ENCODE measurements at regions of chr1 and their contacts with region 1.

Region 1: GRCh38 chr1:85612704-85613361 is 32.3 kb downstream of the CCN1 start:
- DNase-seq: peak; percentile 85
- ATAC-seq: peak; percentile 92
- H3K4me3 ChIP-seq: peak overlapping the region; percentile 30 to 44 (median 30); a peak in 4 of 6 replicates
- H3K27ac ChIP-seq: peak overlapping the region; percentile 51
- H3K4me1 ChIP-seq: peaks cover 23% of the 10 kb centered on the region
- H3K27me3 ChIP-seq: no peaks in the 10 kb centered on the region
- CTCF ChIP-seq: peak; percentile 72
- EP300 ChIP-seq: no peak
- POLR2A ChIP-seq: peak in 1 of 2 experiments; percentile 31; a peak in 1 of 4 replicates
- RAD21 ChIP-seq: peak; percentile 66

Region 2: GRCh38 chr1:85584264-85584781 is 28.5 kb before region 1 on chr1:
- CTCF ChIA-PET with region 1: interaction called, 3 read pairs
- POLR2A ChIA-PET with region 1: interaction called, 58 read pairs
- in situ Hi-C with region 1: no loop called
- intact Hi-C with region 1: loop called (anchors 2 kb)
- DNase-seq: peak; percentile 63
- ATAC-seq: no peak
- H3K4me3 ChIP-seq: no peak overlapping the region
- H3K27ac ChIP-seq: no peak overlapping the region
- H3K4me1 ChIP-seq: peaks cover 52% of the 10 kb centered on the region
- H3K27me3 ChIP-seq: peaks cover 0 to 3% of the 10 kb centered on the region in 2 experiments; a peak in 1 of 5 replicates
- CTCF ChIP-seq: no peak
- EP300 ChIP-seq: no peak; a peak in 1 of 4 replicates
- POLR2A ChIP-seq: peak in 1 of 2 experiments; percentile 83; a peak in 2 of 4 replicates
- RAD21 ChIP-seq: no peak

Region 3: GRCh38 chr1:85628791-85629531 is 16.1 kb after region 1 on chr1:
- CTCF ChIA-PET with region 1: no interaction called
- POLR2A ChIA-PET with region 1: interaction called, 38 read pairs
- in situ Hi-C with region 1: no loop called
- intact Hi-C with region 1: loop called (anchors 2 kb)
- DNase-seq: peak; percentile 82
- ATAC-seq: peak; percentile 96
- H3K4me3 ChIP-seq: peak overlapping the region; percentile 48 to 62 (median 56)
- H3K27ac ChIP-seq: peak overlapping the region; percentile 91
- H3K4me1 ChIP-seq: peaks cover 41% of the 10 kb centered on the region
- H3K27me3 ChIP-seq: no peaks in the 10 kb centered on the region
- CTCF ChIP-seq: no peak
- EP300 ChIP-seq: 0 out of 4 replicates have a peak, but pooled peaks of 1 of the 2 experiments have one; percentile 10
- POLR2A ChIP-seq: peak; percentile 15 to 50; a peak in 2 of 4 replicates
- RAD21 ChIP-seq: no peak

Region 4: DNA sequence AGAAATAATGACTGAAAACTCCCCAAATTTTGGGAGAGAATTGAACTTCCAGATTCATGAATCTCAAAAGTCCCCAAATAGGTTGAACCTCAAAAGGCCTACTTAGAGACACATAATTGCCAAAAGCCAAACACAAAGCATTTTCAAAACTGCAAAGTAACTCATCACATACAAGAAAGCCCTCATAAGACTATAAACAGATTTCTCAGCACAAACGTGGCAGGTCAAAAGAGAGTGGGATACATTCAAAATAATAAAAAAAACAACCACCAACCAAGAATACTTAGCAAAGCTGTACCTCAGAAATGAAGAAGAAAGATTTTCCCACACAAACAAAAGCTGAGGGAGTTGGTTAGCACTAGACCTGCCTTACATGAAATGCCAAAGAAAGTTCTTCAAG is 25.6 kb after region 1 on chr1:
- CTCF ChIA-PET with region 1: no interaction called
- POLR2A ChIA-PET with region 1: interaction called, 15 read pairs
- in situ Hi-C with region 1: no loop called
- intact Hi-C with region 1: loop called (anchors 1 kb)
- DNase-seq: no peak
- ATAC-seq: no peak
- H3K4me3 ChIP-seq: no peak overlapping the region
- H3K27ac ChIP-seq: no peak overlapping the region
- H3K4me1 ChIP-seq: peaks cover 20% of the 10 kb centered on the region
- H3K27me3 ChIP-seq: no peaks in the 10 kb centered on the region
- CTCF ChIP-seq: no peak
- EP300 ChIP-seq: no peak
- POLR2A ChIP-seq: no peak
- RAD21 ChIP-seq: no peak

Region 5: DNA sequence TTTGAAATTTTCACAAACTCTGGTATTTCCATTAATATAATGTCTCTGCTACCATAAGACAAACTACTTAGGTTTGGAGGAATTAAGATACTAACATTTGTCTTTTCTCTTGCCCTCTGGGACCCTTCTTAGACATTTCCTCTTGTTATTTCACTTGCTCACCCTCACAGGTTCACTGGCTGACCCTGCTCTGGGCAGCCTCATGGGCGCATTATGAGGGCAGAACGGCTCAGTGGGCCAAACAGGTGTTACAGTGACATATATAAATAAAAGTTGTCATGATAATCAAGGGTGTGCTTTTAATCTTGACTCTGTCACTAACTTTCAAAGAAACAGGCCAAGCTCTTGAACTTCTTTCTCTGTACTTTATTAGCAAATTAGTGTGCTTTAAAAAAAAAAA is 48.9 kb after region 1 on chr1:
- CTCF ChIA-PET with region 1: no interaction called
- POLR2A ChIA-PET with region 1: no interaction called
- in situ Hi-C with region 1: no loop called
- intact Hi-C with region 1: no loop called
- DNase-seq: no peak
- ATAC-seq: peak; percentile 51; the same call in 1 of the 3 replicates
- H3K4me3 ChIP-seq: no peak overlapping the region
- H3K27ac ChIP-seq: no peak overlapping the region
- H3K4me1 ChIP-seq: peaks cover 13% of the 10 kb centered on the region; the same call in 1 of the 2 replicates
- H3K27me3 ChIP-seq: no peaks in the 10 kb centered on the region; a peak in 1 of 5 replicates
- CTCF ChIP-seq: no peak
- EP300 ChIP-seq: no peak
- POLR2A ChIP-seq: no peak
- RAD21 ChIP-seq: no peak

Region 6: DNA sequence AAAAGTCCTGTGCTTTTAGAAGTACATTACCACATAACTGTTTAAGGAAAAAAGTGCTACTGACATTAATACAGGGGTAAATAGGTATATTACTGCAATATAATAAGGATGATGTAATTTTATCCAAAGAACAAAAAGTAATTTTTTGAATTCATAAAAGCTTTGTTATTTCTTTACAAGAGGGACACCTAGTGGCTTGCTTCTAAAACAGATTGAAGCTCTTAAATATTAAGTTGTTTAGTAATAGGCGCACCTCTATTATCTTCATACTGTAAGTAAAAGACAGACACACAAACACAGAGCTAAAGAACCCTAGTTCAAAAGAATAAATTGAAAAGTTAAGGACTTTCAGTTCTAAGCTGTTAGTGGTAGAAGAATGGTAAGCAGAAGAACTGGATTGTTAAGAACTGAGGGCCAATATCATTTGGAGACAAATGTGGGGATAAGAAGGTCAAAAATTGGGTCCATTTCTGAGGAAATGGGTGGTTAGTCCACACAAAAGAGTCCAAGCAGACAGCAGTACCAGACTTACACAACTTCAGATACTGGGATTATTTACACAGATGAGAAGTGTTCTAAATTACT is 80.0 kb after region 1 on chr1:
- CTCF ChIA-PET with region 1: interaction called, 3 read pairs
- POLR2A ChIA-PET with region 1: interaction called, 3 read pairs
- in situ Hi-C with region 1: loop called (anchors 10 kb)
- intact Hi-C with region 1: loop called (anchors 5 kb)
- DNase-seq: peak; percentile 37
- ATAC-seq: no peak
- H3K4me3 ChIP-seq: no peak overlapping the region
- H3K27ac ChIP-seq: peak overlapping the region; percentile 5
- H3K4me1 ChIP-seq: no peaks in the 10 kb centered on the region
- H3K27me3 ChIP-seq: no peaks in the 10 kb centered on the region
- CTCF ChIP-seq: peak; percentile 33; the same call in 1 of the 2 replicates
- EP300 ChIP-seq: no peak
- POLR2A ChIP-seq: no peak
- RAD21 ChIP-seq: 0 out of 2 replicates have a peak, but pooled peaks have one; percentile 15

Region 7: DNA sequence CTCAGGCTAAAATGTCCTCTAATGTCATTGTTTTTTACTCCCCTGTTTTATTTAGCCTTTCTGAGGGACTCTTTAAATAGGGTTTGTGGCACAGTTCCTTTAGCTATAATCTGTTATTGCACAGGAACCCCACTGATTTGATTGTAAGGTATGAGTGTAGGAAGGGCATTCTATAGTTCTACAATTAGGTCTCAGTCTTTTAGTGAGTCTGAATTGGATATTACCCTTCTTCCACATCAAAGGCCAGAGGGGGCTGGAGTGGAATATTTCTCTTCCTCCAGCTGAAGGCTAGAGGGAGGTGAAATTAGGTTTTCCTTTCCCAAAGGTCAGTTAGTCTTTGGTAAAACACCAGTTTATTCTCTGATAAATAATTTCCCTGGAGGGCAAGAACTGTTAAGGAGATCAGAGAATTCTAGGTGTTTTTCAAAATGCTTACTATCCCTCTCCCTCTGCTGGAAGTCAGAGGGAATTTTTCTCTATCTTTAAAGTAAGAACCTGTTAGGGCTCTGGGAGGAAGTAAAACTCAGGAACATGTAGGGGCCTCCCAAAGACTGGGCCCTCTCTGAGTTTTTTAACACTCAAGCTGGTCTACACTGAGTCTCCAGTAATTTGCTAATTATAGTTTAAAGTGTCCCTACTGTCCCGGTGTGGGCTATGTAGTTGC is 271.7 kb after region 1 on chr1:
- CTCF ChIA-PET with region 1: no interaction called
- POLR2A ChIA-PET with region 1: no interaction called
- in situ Hi-C with region 1: loop called (anchors 10 kb)
- intact Hi-C with region 1: loop called (anchors 5 kb)
- DNase-seq: peak; percentile 14
- ATAC-seq: peak; percentile 74
- H3K4me3 ChIP-seq: no peak overlapping the region
- H3K27ac ChIP-seq: no peak overlapping the region
- H3K4me1 ChIP-seq: no peaks in the 10 kb centered on the region
- H3K27me3 ChIP-seq: no peaks in the 10 kb centered on the region; a peak in 1 of 5 replicates
- CTCF ChIP-seq: peak; percentile 23; the same call in 1 of the 2 replicates
- EP300 ChIP-seq: no peak
- POLR2A ChIP-seq: no peak
- RAD21 ChIP-seq: no peak

Measured in HepG2 (cell line).